Motor neuron (in vitro differentiated cells): ENCODE measurements at regions of chr11 and their contacts with region 1.

Region 1: GRCh38 chr11:2532704-2533586 is 88.1 kb downstream of the KCNQ1 start:
- ATAC-seq: peak; percentile 73 to 92 (median 78)
- H3K4me3 ChIP-seq: no peak overlapping the region
- H3K27ac ChIP-seq: peak overlapping the region; percentile 28 to 82
- H3K4me1 ChIP-seq: peaks cover 14 to 23% of the 10 kb centered on the region in 2 donors

Region 2: DNA sequence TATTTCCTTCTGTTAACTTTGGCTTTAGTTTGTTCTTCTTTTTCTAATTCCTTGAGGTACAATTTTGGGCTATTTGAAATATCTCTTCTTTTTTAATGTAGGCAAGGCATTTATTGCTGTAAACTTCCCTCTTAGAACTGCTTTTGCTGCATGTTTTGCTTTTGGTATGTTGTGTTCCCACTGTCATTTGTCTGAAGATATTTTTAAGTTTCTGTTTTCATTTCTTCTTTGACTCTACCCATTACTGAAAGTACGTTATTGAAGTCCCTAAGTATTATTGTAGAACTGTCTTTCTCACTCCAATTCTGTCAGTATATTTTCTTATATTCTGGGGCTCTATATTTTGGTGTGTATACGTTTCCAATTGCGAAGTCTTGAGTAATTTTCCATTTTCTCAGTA is 88.9 kb after region 1 on chr11:
- in situ Hi-C with region 1: no loop called
- ATAC-seq: no peak
- H3K4me3 ChIP-seq: no peak overlapping the region
- H3K27ac ChIP-seq: no peak overlapping the region
- H3K4me1 ChIP-seq: no peaks in the 10 kb centered on the region

Region 3: GRCh38 chr11:2892215-2893020 is 359.5 kb after region 1 on chr11:
- in situ Hi-C with region 1: loop called (anchors 5 to 25 kb)
- ATAC-seq: peak; percentile 33 to 79 (median 72)
- H3K4me3 ChIP-seq: peak overlapping the region in 4 of 5 donors; percentile 4 to 28 (median 19)
- H3K27ac ChIP-seq: peak overlapping the region in 1 of 2 donors; percentile 29
- H3K4me1 ChIP-seq: peaks cover 12 to 17% of the 10 kb centered on the region in 2 donors